Activated B cell treated with CpG ODN at 0.5 μM for 24 hours (primary cell): ENCODE measurements at regions of chr7 and their contacts with region 1.

Region 1: DNA sequence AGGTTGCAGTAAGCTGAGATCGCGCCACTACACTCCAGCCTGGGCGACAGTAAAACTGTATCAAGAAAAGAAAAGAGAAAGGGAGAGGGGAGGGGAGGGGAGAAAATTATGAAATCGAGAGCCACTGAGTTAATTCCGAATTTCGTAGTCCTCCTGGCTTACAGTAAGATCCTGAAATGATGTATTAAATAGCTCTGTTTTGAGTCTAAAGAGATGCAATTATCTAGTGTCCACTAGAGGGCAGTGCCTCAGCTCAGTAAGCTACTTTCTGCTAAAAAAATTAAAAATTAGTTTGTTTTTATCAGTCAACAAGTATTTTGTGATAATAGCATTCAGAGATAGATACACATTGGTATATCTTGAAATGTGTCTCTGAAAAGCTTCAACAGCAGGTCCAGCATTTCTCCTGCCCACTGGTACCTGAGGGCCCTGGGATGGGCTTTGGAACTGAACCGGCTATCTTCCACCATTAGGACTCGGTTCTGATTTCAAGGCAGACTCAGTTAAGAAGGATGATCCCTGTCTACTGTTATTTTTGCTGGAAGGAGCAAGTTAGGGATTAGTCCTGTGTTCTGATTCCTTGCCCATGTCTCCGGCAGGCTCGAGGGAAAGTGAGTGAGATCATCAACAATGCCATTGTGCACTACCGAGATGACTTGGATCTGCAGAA is 19.5 kb downstream of the TSPAN33 start:
- DNase-seq: no peak
- ATAC-seq: no peak
- H3K4me3 Mint-ChIP-seq: no peak overlapping the region
- H3K27ac Mint-ChIP-seq: peak overlapping the region; percentile 59
- H3K4me1 Mint-ChIP-seq: peaks cover 89% of the 10 kb centered on the region
- H3K27me3 Mint-ChIP-seq: no peaks in the 10 kb centered on the region
- CTCF ChIP-seq: peak; percentile 62

Region 2: DNA sequence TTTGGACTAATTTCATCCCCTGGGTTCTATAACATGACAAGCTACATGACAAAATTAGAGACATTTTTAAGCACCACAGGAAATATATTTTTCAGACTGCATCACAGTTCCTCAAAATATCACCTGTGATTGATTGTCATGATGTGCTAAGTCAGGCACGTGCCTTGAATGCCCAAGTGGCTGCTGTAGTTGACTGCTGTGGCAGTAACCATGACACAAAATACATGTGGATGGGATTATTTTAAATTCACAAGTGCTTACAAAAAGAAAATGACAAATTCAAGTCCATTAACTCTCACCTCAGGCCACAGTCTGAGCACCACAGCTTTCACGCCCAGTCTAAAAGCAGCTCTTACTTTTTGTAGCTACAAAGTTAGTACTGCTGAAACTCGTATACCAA is 154.6 kb before region 1 on chr7:
- CTCF ChIA-PET with region 1: interaction called, 11 read pairs
- POLR2A ChIA-PET with region 1: no interaction called
- intact Hi-C with region 1: no loop called
- DNase-seq: no peak
- ATAC-seq: peak; percentile 86
- H3K4me3 Mint-ChIP-seq: peak overlapping the region; percentile 17
- H3K27ac Mint-ChIP-seq: peak overlapping the region; percentile 82
- H3K4me1 Mint-ChIP-seq: peaks cover 43% of the 10 kb centered on the region
- H3K27me3 Mint-ChIP-seq: no peaks in the 10 kb centered on the region
- CTCF ChIP-seq: no peak

Region 3: DNA sequence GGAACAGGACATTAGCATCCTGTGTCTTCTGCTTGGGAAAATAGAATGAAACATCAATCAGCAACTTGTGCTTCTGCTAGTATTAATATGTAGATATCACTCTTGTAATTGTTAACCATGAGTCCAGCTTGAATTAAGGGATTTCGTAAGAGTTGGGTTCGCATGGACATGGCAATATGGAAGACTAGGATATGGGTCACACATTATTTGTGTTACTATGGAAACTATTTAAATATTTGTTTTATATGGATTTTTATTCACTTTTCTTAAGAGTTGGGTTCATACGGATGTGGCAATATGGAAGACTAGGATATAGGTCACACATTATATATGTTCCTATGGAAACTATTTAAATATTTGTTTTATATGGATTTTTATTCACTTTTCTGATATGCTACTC is 133.6 kb before region 1 on chr7:
- CTCF ChIA-PET with region 1: no interaction called
- POLR2A ChIA-PET with region 1: no interaction called
- intact Hi-C with region 1: no loop called
- DNase-seq: no peak
- ATAC-seq: no peak
- H3K4me3 Mint-ChIP-seq: no peak overlapping the region
- H3K27ac Mint-ChIP-seq: no peak overlapping the region
- H3K4me1 Mint-ChIP-seq: peaks cover 40% of the 10 kb centered on the region
- H3K27me3 Mint-ChIP-seq: no peaks in the 10 kb centered on the region
- CTCF ChIP-seq: no peak

Region 4: DNA sequence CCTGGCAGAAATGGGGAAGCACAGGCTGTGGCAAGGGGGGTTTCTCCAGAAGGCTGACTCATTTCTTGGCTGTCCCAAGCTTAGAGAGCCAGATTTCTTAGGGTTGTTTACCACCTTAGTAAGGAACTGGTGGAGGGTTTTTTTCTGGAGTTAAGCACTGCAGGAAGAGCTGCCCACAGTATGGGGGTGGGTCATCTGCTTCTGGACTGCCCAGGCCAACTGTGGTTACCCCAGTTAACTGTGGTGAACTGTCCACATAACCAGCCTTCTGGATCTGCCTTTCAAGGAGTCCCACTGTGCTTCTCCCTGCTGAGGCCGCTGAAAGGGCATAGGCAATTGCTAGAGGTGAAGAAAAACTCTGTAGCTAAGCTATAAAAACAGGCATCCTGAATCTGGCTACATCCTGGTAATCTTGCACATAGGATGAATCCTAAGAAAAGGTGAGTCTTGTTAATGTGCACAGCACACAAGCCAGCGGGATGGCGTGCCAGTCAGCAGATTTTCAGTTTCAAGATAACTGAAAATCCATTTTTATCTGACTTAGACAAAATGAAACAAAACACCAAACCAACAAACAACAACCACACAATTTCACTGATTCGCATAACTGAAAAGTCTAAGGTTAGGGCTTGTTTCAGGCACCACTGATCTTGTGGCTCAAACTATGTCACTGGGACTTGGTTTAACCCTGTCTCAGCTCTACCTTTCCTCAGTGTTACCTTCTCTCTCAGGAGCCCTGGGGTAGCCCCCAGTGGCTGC is 41.1 kb before region 1 on chr7:
- CTCF ChIA-PET with region 1: interaction called, 14 read pairs
- POLR2A ChIA-PET with region 1: interaction called, 20 read pairs
- intact Hi-C with region 1: loop called (anchors 1 kb)
- DNase-seq: peak; percentile 53
- ATAC-seq: peak; percentile 89
- H3K4me3 Mint-ChIP-seq: peak overlapping the region; percentile 73
- H3K27ac Mint-ChIP-seq: peak overlapping the region; percentile 96
- H3K4me1 Mint-ChIP-seq: peaks cover 40% of the 10 kb centered on the region
- H3K27me3 Mint-ChIP-seq: no peaks in the 10 kb centered on the region
- CTCF ChIP-seq: no peak

Region 5: DNA sequence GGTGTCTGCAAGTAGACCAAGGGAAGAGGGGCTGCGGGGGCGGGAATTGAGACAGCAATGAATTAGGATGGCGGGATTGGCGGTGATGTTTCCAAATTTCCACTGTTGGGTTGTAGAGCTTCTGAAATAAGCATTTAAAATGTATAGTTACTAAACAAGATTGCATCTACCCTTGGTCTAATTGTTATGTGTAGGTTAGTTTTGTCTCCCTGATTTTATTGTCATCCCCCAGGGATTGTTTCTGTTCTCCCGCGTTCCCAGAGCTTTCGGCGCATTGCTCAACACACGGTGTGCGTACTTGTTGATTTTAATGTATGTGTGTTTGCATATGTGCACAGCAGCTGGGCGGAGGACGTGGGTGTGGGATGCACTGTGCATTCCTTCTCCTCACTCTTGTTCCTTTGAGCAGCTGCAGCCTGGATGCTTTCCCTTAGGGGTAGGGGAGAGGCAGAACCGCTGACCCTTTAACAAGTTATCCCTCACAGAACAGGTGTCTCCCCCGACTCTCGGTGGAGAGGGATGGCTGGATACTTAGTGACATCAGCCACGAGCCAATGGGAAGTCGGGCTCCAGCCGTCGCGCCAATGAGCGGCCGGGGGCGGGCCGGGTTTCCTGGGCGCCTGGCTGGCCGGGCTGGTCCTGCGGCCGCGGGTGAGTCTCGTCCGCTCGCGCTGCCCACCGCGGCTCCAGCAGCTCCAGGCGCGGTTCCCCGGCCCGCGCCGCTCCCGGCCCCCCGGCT is 19.7 kb before region 1 on chr7 and contains the start of gene TSPAN33:
- CTCF ChIA-PET with region 1: interaction called, 32 read pairs
- POLR2A ChIA-PET with region 1: interaction called, 49 read pairs
- intact Hi-C with region 1: loop called (anchors 1 kb)
- DNase-seq: peak; percentile 75
- ATAC-seq: peak; percentile 62
- H3K4me3 Mint-ChIP-seq: peak within 1 kb of the TSS; percentile 98
- H3K27ac Mint-ChIP-seq: peak within 1 kb of the TSS; percentile 99
- H3K4me1 Mint-ChIP-seq: peaks cover 48% of the 10 kb centered on the region
- H3K27me3 Mint-ChIP-seq: no peaks in the 10 kb centered on the region
- CTCF ChIP-seq: no peak
- total RNA-seq, gene TSPAN33: 332 and 341 TPM in 2 replicates

Region 6: DNA sequence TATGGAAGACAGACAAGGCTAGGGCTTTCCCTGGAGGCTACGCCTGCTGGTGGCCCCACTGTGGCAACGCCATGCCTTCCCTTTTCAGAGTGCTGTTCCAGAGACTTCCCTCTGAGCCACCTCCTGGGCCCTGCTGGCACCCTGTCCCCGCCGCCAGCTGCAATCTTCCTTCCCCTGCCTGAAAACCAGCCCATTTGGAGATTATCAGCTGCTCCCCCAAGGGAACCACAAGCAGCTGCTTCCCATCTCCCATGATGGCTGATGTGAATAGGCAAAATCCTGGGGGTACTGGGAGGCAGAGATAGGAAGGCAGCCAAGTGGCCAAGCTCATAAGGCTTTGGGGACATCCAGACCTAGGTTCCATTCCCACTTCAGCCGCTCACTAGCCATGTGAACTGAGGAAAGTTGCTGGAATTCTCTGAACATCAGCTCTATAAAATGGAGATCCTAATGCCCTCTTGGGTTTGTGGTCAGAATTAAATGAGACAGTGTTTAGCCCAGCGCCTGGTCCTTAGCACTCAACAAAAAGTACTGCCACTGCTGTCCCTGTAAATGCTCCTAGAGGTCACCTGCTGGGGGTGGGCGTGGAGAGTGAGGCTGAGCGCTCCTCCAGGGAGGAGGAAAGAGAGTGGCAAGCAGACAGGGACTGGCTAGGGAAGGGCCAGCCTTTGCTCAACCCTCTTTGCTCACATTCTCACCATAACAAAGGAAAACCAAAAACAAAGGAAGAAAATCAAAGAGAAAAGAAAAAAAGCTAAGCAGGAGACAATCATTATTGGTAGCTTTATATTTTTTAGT is 13.6 kb before region 1 on chr7:
- CTCF ChIA-PET with region 1: interaction called, 32 read pairs
- POLR2A ChIA-PET with region 1: interaction called, 49 read pairs
- intact Hi-C with region 1: loop called (anchors 1 kb)
- DNase-seq: no peak
- ATAC-seq: no peak
- H3K4me3 Mint-ChIP-seq: no peak overlapping the region
- H3K27ac Mint-ChIP-seq: peak overlapping the region; percentile 56
- H3K4me1 Mint-ChIP-seq: peaks cover 87% of the 10 kb centered on the region
- H3K27me3 Mint-ChIP-seq: no peaks in the 10 kb centered on the region
- CTCF ChIP-seq: no peak